ENCODE measurements at regions of chr9 and their contacts with region 1.

Region 1: DNA sequence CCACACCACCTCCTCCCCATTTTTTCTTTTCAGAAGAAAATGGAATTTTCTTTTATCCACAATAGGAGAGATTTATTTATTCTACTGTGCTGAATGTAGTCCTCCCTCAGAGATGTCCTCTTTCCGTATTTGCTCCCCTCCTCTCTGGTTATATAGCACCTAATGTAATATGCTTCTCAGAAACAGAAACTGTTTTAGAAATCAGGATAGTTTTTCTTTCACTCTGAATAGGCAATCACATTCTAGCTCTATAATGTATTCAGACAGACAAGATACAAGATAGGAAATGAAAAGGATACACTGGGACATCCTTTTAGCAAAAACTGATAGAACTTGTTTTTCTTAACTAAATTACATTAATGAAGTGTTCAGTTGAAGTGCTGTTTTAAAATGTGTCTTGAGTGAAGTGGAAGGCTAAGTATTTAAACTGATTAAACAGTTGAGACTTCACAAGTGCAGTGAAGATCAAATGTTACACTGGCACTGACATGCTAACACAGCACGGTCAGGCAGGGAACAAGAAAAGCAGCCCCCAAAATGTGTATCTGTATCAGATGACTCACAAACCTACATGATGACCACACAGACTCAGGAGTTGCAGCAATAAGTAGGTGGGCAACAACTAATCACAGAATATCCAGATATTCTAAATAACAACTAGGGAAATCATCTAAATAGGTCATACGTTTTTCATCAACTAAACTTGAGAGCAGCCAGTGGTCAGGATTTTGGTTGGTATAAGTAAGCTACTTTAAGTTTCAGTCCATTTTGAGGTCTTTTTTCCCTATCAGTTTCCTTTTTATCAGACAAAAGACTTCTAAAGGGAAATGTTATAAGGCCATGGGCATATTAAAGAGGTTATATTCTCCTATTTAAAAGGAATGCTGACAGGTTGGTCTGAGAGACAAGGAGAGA is 260.4 kb downstream of the MLLT3 start:
- DNase-seq: no peak
- H3K4me3 Mint-ChIP-seq: peak overlapping the region; percentile 38
- H3K27ac Mint-ChIP-seq: peak overlapping the region; percentile 83
- H3K4me1 Mint-ChIP-seq: peaks cover 65% of the 10 kb centered on the region
- H3K27me3 Mint-ChIP-seq: no peaks in the 10 kb centered on the region

Region 2: DNA sequence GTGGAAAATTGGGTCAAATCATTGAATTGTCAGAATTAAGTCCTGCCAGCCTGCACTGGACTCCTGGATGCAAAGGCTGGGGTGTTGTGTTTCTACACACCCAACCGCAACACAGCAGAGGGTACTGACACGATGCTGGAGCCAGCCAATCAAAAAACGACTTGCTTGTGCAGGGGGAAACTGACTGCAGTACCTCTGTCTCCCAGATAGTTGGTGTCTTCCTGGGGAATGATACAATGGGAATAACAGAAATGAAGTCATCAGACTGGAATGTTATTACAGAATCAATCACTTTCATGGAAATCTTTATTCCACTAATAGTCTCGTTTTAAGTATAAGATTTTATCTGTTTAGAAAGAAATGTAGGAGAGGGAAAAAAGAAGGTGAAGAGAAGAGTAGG is 69.9 kb before region 1 on chr9:
- intact Hi-C with region 1: no loop called
- DNase-seq: no peak
- H3K4me3 Mint-ChIP-seq: no peak overlapping the region
- H3K27ac Mint-ChIP-seq: no peak overlapping the region
- H3K4me1 Mint-ChIP-seq: peaks cover 1% of the 10 kb centered on the region
- H3K27me3 Mint-ChIP-seq: peaks cover 2% of the 10 kb centered on the region

Region 3: DNA sequence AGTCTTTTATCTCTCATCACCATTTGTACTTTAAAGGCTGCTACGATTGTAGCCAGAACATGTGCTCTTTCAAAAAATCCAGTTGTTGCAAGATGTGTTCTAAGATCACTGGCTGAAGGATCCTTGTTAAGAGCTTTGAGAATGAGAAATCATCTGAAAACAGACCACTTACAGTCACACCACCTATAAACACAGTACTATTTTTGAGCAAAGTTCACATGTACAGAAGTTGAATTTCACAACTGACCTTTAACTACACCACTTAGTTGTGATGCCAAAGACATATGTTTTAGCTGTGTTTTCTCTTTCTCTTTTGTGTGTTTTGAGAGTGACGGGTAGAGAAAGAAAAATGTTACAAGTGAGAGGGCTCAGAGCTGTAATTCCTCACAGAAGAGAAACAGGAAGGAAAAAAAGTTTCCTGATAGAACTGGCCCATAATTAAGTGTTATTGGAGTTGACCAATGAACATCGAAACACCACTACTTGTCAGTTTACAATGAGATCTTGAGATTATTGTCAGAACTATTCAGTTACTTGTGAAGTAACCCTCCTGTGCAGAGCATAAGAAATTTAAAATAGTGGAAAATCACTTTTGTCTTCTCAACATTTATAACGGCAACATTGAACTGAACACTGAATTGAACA is 14.9 kb after region 1 on chr9:
- intact Hi-C with region 1: loop called (anchors 2 kb)
- DNase-seq: no peak
- H3K4me3 Mint-ChIP-seq: no peak overlapping the region
- H3K27ac Mint-ChIP-seq: no peak overlapping the region
- H3K4me1 Mint-ChIP-seq: peaks cover 36% of the 10 kb centered on the region
- H3K27me3 Mint-ChIP-seq: no peaks in the 10 kb centered on the region

Region 4: DNA sequence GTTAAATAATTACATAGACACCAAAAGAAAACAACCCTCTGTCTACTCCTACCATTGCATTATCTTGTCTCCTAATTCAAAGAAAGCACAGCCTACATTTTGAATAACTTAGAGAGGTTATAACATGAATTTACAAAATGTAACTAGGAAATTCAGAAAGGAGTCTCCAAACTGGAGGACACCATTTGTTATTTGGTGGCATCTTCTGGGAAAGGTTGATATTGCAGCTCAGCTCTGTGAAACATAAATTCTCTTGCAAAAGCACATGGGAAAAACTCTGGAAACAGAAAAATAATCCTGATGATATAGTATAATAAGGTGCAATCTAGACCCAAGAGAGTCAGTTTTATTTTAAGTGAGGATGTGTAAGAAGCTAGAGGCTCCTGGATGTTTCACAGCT is 45.1 kb after region 1 on chr9:
- intact Hi-C with region 1: loop called (anchors 5 kb)
- DNase-seq: no peak
- H3K4me3 Mint-ChIP-seq: no peak overlapping the region
- H3K27ac Mint-ChIP-seq: no peak overlapping the region
- H3K4me1 Mint-ChIP-seq: peaks cover 41% of the 10 kb centered on the region
- H3K27me3 Mint-ChIP-seq: no peaks in the 10 kb centered on the region

Region 5: GRCh38 chr9:20703146-20703545 is 341.2 kb after region 1 on chr9:
- intact Hi-C with region 1: no loop called
- DNase-seq: no peak
- H3K4me3 Mint-ChIP-seq: no peak overlapping the region
- H3K27ac Mint-ChIP-seq: no peak overlapping the region
- H3K4me1 Mint-ChIP-seq: no peaks in the 10 kb centered on the region
- H3K27me3 Mint-ChIP-seq: no peaks in the 10 kb centered on the region